ENCODE measurements at regions of chr18 and their contacts with region 1.

Region 1: GRCh38 chr18:62584241-62585120 is 61.7 kb downstream of the ZCCHC2 start:
- DNase-seq: peak; percentile 77 to 93
- H3K4me3 ChIP-seq: peak overlapping the region in 1 of 4 experiments; percentile 43; a peak in 2 of 8 replicates
- H3K27ac ChIP-seq: no peak overlapping the region; the same call in 1 of the 2 replicates
- H3K4me1 ChIP-seq: peaks cover 2 to 8% (median 6%) of the 10 kb centered on the region in 4 experiments; a peak in 6 of 7 replicates
- H3K27me3 ChIP-seq: no peaks in the 10 kb centered on the region
- CTCF ChIP-seq: peak; percentile 91 to 100 (median 98)
- EP300 ChIP-seq: no peak
- POLR2A ChIP-seq: no peak
- RAD21 ChIP-seq: peak; percentile 83 to 90

Region 2: DNA sequence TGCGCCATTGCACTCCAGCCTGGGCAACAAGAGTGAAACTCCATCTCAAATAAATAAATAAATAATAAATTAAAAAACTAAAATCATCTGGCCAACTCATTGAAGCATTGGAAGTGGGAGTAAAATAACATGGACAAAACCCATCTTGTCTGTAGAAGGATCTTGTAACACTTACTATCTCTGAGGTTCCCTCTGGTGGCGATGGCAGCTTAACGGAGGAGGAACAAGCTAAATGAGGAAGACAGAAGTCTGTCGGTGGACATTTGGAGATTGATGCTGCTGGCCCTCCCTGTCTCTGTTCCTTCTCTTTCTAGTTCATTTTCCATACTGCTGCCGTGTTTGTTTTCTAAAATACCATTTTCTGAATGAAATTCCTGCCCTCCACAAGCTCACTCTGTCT is 18.3 kb before region 1 on chr18:
- CTCF ChIA-PET with region 1: interaction called, 20 read pairs
- POLR2A ChIA-PET with region 1: no interaction called
- DNase-seq: peak in 1 of 2 experiments; percentile 5
- H3K4me3 ChIP-seq: no peak overlapping the region
- H3K27ac ChIP-seq: no peak overlapping the region
- H3K4me1 ChIP-seq: no peaks in the 10 kb centered on the region
- H3K27me3 ChIP-seq: no peaks in the 10 kb centered on the region
- CTCF ChIP-seq: peak in 2 of 3 experiments; percentile 49 to 53; a peak in 3 of 4 replicates
- EP300 ChIP-seq: no peak
- POLR2A ChIP-seq: no peak
- RAD21 ChIP-seq: peak; percentile 44 to 58

Region 3: DNA sequence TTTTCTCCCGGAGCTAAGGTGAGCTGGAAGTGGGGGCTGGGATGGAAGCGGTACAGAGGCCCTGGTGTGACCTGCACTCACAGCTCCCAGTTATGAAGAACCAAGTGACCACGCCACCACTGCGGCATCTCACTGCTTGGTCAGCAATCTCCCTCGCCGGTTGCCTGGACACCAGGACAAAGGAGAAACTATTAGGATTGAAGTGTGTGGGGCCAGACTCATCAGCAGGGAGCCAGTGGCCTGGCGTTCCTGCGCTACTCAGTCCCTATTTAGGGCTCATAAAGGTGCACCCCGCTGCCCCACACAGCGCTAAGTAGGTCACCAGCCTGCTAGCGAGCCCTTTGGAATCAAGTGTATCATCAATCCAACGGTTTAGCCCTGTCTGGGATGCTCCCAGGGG is 21.2 kb after region 1 on chr18:
- CTCF ChIA-PET with region 1: interaction called, 34 read pairs
- POLR2A ChIA-PET with region 1: no interaction called
- DNase-seq: no peak
- H3K4me3 ChIP-seq: no peak overlapping the region
- H3K27ac ChIP-seq: no peak overlapping the region
- H3K4me1 ChIP-seq: peaks cover 0 to 12% (median 8%) of the 10 kb centered on the region in 4 experiments; a peak in 4 of 7 replicates
- H3K27me3 ChIP-seq: no peaks in the 10 kb centered on the region
- CTCF ChIP-seq: no peak
- EP300 ChIP-seq: no peak
- POLR2A ChIP-seq: no peak
- RAD21 ChIP-seq: no peak

Region 4: GRCh38 chr18:62637807-62638687 is 53.6 kb after region 1 on chr18:
- CTCF ChIA-PET with region 1: interaction called, 31 read pairs
- POLR2A ChIA-PET with region 1: no interaction called
- DNase-seq: peak; percentile 23 to 81
- H3K4me3 ChIP-seq: no peak overlapping the region
- H3K27ac ChIP-seq: no peak overlapping the region
- H3K4me1 ChIP-seq: no peaks in the 10 kb centered on the region
- H3K27me3 ChIP-seq: no peaks in the 10 kb centered on the region
- CTCF ChIP-seq: peak; percentile 79 to 91 (median 88)
- EP300 ChIP-seq: no peak
- POLR2A ChIP-seq: no peak
- RAD21 ChIP-seq: peak; percentile 77 to 83

Region 5: DNA sequence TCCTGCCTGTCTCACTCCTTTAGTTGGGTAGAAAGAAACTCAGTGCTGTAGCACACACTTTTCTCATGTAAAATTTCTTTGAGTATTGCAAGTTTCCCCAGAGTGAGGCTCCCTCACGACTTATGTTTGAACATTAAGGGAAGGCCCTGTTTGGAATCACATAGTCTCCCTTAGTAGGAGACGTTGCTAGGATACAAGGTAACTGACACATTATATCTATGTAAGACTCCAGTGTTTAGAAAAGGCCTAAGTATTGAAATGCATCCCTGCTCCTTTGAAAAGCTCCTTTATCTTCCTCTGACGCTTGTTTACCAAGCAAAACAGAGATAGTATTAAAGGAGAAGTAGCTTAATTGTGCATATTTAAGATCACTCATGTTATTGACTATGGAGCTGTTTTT is 379.0 kb after region 1 on chr18:
- CTCF ChIA-PET with region 1: interaction called, 26 read pairs
- POLR2A ChIA-PET with region 1: no interaction called
- DNase-seq: no peak
- H3K4me3 ChIP-seq: no peak overlapping the region
- H3K27ac ChIP-seq: no peak overlapping the region
- H3K4me1 ChIP-seq: peaks cover 0 to 7% (median 0%) of the 10 kb centered on the region in 4 experiments; a peak in 2 of 7 replicates
- H3K27me3 ChIP-seq: no peaks in the 10 kb centered on the region
- CTCF ChIP-seq: no peak
- EP300 ChIP-seq: no peak
- POLR2A ChIP-seq: no peak
- RAD21 ChIP-seq: no peak

Region 6: GRCh38 chr18:62999392-62999791 is 414.9 kb after region 1 on chr18:
- CTCF ChIA-PET with region 1: interaction called, 11 read pairs
- POLR2A ChIA-PET with region 1: no interaction called
- DNase-seq: no peak
- H3K4me3 ChIP-seq: no peak overlapping the region
- H3K27ac ChIP-seq: no peak overlapping the region
- H3K4me1 ChIP-seq: no peaks in the 10 kb centered on the region
- H3K27me3 ChIP-seq: no peaks in the 10 kb centered on the region
- CTCF ChIP-seq: no peak
- EP300 ChIP-seq: no peak
- POLR2A ChIP-seq: no peak
- RAD21 ChIP-seq: no peak

Measured in H1 (cell line).